Vagina (tissue), 2 donors: ENCODE measurements at regions of chr2 and their contacts with region 1.

Region 1: DNA sequence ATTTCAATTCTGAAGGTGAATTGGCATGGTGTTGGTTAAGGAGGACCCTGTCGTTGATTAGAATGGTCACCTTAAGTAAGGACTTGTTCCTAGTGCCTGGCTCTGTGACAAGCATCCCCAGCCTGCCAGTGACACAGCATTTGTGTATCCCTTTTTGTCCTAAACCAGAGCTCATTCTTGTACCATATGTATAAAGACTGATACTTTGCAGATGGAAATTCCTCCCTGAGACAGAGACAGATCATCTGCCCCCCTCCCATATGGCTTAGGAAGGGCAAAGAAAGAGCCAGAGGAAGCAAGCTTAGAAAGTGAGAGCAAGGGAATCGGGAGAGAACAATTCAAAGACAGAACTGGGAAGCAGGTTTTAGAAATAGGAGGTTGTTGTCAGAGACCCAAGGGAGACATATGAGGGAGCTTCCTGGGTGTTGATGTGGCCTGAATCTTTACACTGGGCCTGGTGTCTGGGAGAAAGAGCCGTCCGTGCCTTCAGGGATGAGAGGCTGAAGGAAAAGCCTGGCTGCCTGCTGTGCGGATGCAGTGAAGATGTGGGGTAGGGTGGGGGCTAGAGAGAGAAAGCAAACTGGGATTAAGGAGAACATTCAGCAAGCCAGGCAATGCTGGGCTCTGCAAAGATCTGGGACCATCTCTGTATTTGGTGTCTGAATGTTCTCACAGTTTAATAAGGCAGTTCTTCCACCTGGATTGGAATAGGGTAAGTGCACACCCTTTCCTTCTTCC is 13.2 kb upstream of the CHRNA1 start:
- DNase-seq: no peak
- H3K4me3 ChIP-seq: no peak overlapping the region
- H3K27ac ChIP-seq: peak overlapping the region; percentile 21
- H3K4me1 ChIP-seq: peaks cover 15% of the 10 kb centered on the region
- H3K27me3 ChIP-seq: no peaks in the 10 kb centered on the region
- CTCF ChIP-seq: no peak
- POLR2A ChIP-seq: no peak

Region 2: DNA sequence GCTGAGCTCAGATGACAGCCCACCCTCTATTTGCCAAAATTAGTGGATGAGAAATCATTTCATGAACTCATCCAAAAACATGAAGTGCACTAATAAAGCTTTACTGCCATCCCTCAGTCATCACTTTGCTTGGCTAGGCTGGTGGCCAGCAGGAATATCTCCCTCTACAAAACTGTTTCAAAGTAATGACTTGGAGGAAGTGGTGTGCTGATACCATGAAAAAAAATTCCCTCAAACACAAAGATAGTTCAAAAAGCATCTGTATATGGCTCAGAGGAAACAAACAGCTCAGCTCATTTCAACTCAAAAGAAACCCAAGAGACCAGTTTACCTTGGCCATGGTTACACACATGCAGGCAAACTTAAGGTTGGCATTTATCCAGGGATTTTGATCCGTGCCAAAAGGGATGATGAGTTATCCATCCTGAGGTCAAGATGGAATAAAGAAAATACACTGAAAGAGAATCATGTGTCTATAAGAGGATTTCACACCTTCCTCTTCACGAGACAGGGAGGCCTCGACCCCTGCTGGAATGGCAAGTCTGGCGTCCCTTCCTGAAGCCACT is 161.6 kb before region 1 on chr2:
- intact Hi-C with region 1: no loop called
- DNase-seq: no peak
- H3K4me3 ChIP-seq: no peak overlapping the region
- H3K27ac ChIP-seq: peak overlapping the region; percentile 6
- H3K4me1 ChIP-seq: peaks cover 56% of the 10 kb centered on the region
- H3K27me3 ChIP-seq: no peaks in the 10 kb centered on the region
- CTCF ChIP-seq: no peak
- POLR2A ChIP-seq: no peak

Region 3: GRCh38 chr2:174673876-174674275 is 103.6 kb before region 1 on chr2:
- intact Hi-C with region 1: no loop called
- DNase-seq: no peak
- H3K4me3 ChIP-seq: no peak overlapping the region
- H3K27ac ChIP-seq: peak overlapping the region; percentile 49
- H3K4me1 ChIP-seq: peaks cover 17% of the 10 kb centered on the region
- H3K27me3 ChIP-seq: no peaks in the 10 kb centered on the region
- CTCF ChIP-seq: no peak
- POLR2A ChIP-seq: no peak

Region 4: GRCh38 chr2:174729797-174730697 is 47.5 kb before region 1 on chr2:
- intact Hi-C with region 1: loop called (anchors 1 kb)
- DNase-seq: no peak
- H3K4me3 ChIP-seq: peak overlapping the region; percentile 39 to 47
- H3K27ac ChIP-seq: no peak overlapping the region
- H3K4me1 ChIP-seq: peaks cover 8% of the 10 kb centered on the region
- H3K27me3 ChIP-seq: no peaks in the 10 kb centered on the region
- CTCF ChIP-seq: no peak
- POLR2A ChIP-seq: no peak

Region 5: DNA sequence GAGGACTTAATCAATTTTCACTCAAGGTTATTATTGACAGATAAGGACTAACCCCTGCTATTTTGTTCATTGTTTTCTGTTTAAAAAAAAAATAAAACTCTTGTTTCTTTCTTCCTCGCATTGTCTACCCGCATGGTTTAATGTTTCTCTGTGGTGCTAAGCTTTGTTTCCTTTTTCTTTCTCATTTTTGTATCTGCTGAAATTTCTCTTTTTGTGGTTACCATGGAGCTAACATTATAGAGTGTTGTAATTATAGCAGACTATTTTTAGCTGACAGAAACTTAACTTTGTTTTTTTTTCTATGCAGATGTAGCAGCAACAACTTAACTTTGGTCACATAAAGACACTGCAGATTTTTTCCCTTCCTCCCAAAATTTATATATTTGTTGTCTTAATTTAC is 270.8 kb after region 1 on chr2:
- intact Hi-C with region 1: no loop called
- DNase-seq: no peak
- H3K4me3 ChIP-seq: no peak overlapping the region
- H3K27ac ChIP-seq: no peak overlapping the region
- H3K4me1 ChIP-seq: no peaks in the 10 kb centered on the region
- H3K27me3 ChIP-seq: no peaks in the 10 kb centered on the region
- CTCF ChIP-seq: no peak
- POLR2A ChIP-seq: no peak